ENCODE measurements at regions of chr19 and their contacts with region 1.

Region 1: DNA sequence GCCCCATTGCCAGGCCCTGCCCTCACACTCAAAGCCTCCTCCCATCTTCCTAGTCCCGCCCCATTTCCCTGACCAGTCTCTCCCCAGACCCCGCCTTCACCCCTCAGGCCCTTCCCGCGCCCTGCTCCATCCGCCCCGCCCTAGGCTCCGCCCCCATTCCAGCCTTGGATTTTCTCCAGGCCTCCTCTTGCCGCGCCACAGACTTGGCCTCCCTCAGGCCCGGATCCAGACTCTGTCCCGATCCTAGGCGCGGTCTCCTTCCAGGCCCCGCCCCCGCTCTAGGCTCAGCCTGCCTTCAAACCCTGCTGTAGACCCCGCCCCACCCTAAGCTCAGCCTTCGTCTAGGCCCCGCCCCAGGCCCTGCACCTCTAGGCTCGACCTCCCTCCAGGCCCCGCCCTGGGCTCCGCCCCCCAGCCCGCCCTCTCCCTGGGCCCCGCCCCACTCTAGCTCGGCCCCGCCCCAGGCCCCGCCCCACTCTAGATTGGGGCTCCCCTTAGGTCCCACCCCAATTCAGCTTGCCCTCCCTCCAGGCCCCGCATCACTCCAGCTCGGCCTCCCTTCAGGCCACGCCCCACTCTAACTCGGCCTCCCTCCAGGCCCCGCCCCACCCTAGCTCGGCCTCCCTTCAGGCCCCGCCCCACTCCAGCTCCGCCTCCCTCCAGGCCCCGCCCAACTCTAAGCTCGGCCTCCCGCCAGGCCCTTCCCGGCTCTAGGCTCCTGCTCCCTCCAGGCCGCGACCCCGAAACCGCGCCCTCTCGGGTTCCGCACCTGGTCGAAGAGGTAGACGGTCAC is 18.5 kb downstream of the LMTK3 start:
- DNase-seq: peak; percentile 56 to 93 (median 80)
- ATAC-seq: peak; percentile 69 to 78 (median 74)
- H3K4me3 ChIP-seq: peak overlapping the region; percentile 47 to 59
- H3K4me3 Mint-ChIP-seq: peak overlapping the region; percentile 55 to 63 (median 61)
- H3K27ac ChIP-seq: no peak overlapping the region
- H3K27ac Mint-ChIP-seq: peak overlapping the region in 1 of 2 donors; percentile 19
- H3K4me1 ChIP-seq: peaks cover 2 to 58% of the 10 kb centered on the region in 2 experiments
- H3K4me1 Mint-ChIP-seq: peaks cover 30 to 49% (median 32%) of the 10 kb centered on the region in 3 donors
- H3K27me3 ChIP-seq: peaks cover 3 to 76% of the 10 kb centered on the region in 2 experiments
- H3K27me3 Mint-ChIP-seq: peaks cover 18 to 35% of the 10 kb centered on the region in 2 donors

Region 2: GRCh38 chr19:48468775-48469288 is 24.3 kb before region 1 on chr19:
- CTCF ChIA-PET with region 1: interaction called in 1 of 2 experiments, 10 read pairs
- POLR2A ChIA-PET with region 1: no interaction called
- DNase-seq: peak; percentile 98 to 100 (median 100)
- ATAC-seq: peak; percentile 87 to 92 (median 90)
- H3K4me3 ChIP-seq: peak overlapping the region; percentile 68 to 96
- H3K4me3 Mint-ChIP-seq: peak overlapping the region; percentile 80 to 91 (median 87)
- H3K27ac ChIP-seq: peak overlapping the region; percentile 61
- H3K27ac Mint-ChIP-seq: peak overlapping the region; percentile 92 to 93
- H3K4me1 ChIP-seq: peaks cover 0 to 27% of the 10 kb centered on the region in 2 experiments
- H3K4me1 Mint-ChIP-seq: peaks cover 22 to 29% (median 22%) of the 10 kb centered on the region in 3 donors
- H3K27me3 ChIP-seq: peaks cover 0 to 3% of the 10 kb centered on the region in 2 experiments
- H3K27me3 Mint-ChIP-seq: no peaks in the 10 kb centered on the region

Region 3: GRCh38 chr19:48480558-48481500 is 12.3 kb before region 1 on chr19:
- CTCF ChIA-PET with region 1: no interaction called
- POLR2A ChIA-PET with region 1: no interaction called
- DNase-seq: peak in 33 of 35 experiments; percentile 30 to 71 (median 47)
- ATAC-seq: peak; percentile 85 to 87 (median 86)
- H3K4me3 ChIP-seq: peak overlapping the region; percentile 63 to 82
- H3K4me3 Mint-ChIP-seq: peak overlapping the region; percentile 78 to 89 (median 83)
- H3K27ac ChIP-seq: peak overlapping the region; percentile 77
- H3K27ac Mint-ChIP-seq: peak overlapping the region; percentile 87 to 90
- H3K4me1 ChIP-seq: peaks cover 4 to 26% of the 10 kb centered on the region in 2 experiments
- H3K4me1 Mint-ChIP-seq: peaks cover 13 to 26% (median 19%) of the 10 kb centered on the region in 3 donors
- H3K27me3 ChIP-seq: peaks cover 0 to 3% of the 10 kb centered on the region in 2 experiments
- H3K27me3 Mint-ChIP-seq: no peaks in the 10 kb centered on the region